B cell (primary cell): ENCODE measurements at regions of chr20 and their contacts with region 1.

Region 1: GRCh38 chr20:37249304-37249703 is 12.3 kb downstream of the GHRH start:
- DNase-seq: no peak
- ATAC-seq: no peak
- H3K4me3 ChIP-seq: no peak overlapping the region
- H3K4me3 Mint-ChIP-seq: no peak overlapping the region
- H3K27ac ChIP-seq: no peak overlapping the region
- H3K27ac Mint-ChIP-seq: no peak overlapping the region
- H3K4me1 ChIP-seq: no peaks in the 10 kb centered on the region
- H3K4me1 Mint-ChIP-seq: no peaks in the 10 kb centered on the region
- H3K27me3 ChIP-seq: no peaks in the 10 kb centered on the region
- H3K27me3 Mint-ChIP-seq: no peaks in the 10 kb centered on the region
- CTCF ChIP-seq: no peak

Region 2: DNA sequence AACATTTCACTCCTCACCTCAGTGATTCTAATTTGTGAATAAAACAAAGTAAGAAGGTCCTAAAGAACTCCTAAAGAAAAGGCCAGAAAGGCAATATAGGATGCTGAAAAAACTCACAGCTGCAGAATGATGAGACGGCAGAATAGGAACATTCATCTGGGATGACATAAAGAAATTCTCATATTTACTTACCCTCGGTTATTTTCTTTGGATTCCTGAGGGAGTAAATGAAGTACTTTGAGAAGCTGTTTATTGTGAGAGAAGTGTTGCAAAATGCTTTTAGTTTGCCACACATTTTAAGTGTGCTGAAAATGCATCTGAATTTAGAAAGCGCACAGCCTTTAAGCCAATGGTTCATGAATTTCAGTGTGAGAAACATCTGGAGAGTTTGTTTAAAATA is 117.8 kb before region 1 on chr20:
- CTCF ChIA-PET with region 1: no interaction called
- POLR2A ChIA-PET with region 1: no interaction called
- intact Hi-C with region 1: no loop called
- DNase-seq: no peak
- ATAC-seq: no peak
- H3K4me3 ChIP-seq: no peak overlapping the region
- H3K4me3 Mint-ChIP-seq: no peak overlapping the region
- H3K27ac ChIP-seq: no peak overlapping the region
- H3K27ac Mint-ChIP-seq: no peak overlapping the region
- H3K4me1 ChIP-seq: no peaks in the 10 kb centered on the region
- H3K4me1 Mint-ChIP-seq: no peaks in the 10 kb centered on the region
- H3K27me3 ChIP-seq: no peaks in the 10 kb centered on the region
- H3K27me3 Mint-ChIP-seq: no peaks in the 10 kb centered on the region
- CTCF ChIP-seq: no peak

Region 3: GRCh38 chr20:37336369-37337207 is 87.3 kb after region 1 on chr20:
- CTCF ChIA-PET with region 1: no interaction called
- POLR2A ChIA-PET with region 1: interaction called, 12 read pairs
- intact Hi-C with region 1: no loop called
- DNase-seq: peak; percentile 81
- ATAC-seq: peak; percentile 79
- H3K4me3 ChIP-seq: peak overlapping the region in 3 of 5 experiments; percentile 27 to 44 (median 30)
- H3K4me3 Mint-ChIP-seq: peak overlapping the region; percentile 77
- H3K27ac ChIP-seq: peak overlapping the region; percentile 59 to 60
- H3K27ac Mint-ChIP-seq: peak overlapping the region; percentile 88
- H3K4me1 ChIP-seq: peaks cover 28 to 38% of the 10 kb centered on the region in 2 donors
- H3K4me1 Mint-ChIP-seq: peaks cover 32% of the 10 kb centered on the region
- H3K27me3 ChIP-seq: no peaks in the 10 kb centered on the region
- H3K27me3 Mint-ChIP-seq: no peaks in the 10 kb centered on the region
- CTCF ChIP-seq: no peak

Region 4: DNA sequence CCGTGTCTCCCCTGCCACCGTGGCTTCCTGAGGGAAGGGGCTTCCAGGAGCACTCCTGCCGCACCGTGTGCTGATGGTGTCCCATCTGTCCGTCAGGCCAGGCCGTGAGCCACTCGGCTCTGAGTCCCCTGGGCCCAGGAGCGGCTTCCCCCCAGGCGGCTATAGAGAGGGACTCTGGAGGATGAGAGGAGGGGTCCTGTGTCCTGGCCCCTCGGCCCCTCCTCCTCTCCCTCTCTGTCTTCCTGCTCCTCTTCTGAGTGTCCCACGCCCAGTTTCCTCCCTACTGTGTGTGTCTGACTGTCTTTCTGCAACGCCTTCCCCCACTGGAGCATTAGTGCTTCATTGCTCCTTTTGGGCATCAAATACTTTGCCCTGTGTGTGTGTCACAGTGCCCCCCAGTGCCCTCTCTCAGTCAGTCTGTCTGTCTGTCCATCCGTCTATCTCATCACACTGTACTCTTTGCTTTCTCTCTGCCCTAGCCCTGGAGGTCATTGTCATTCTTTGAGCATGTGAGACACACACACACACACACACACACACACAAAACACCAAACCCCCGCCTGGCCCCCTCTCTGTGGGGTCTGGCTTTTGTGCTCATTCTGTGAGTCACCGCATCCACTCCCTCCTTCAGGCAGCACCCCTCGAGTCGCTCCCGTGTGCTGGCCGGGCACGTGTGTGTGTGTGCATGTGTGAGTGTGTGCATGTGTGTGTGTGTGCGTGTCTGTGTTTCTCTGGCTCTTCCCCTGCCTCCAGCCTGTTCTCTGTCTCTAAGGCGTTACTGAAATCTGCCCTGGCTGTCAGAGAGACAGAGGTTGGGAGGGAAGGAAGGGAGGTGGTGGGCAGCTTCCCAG is 168.5 kb after region 1 on chr20:
- CTCF ChIA-PET with region 1: no interaction called
- POLR2A ChIA-PET with region 1: no interaction called
- intact Hi-C with region 1: no loop called
- DNase-seq: no peak
- ATAC-seq: no peak
- H3K4me3 ChIP-seq: no peak overlapping the region
- H3K4me3 Mint-ChIP-seq: no peak overlapping the region
- H3K27ac ChIP-seq: no peak overlapping the region
- H3K27ac Mint-ChIP-seq: no peak overlapping the region
- H3K4me1 ChIP-seq: peaks cover 2% of the 10 kb centered on the region in 2 donors
- H3K4me1 Mint-ChIP-seq: no peaks in the 10 kb centered on the region
- H3K27me3 ChIP-seq: peaks cover 0 to 16% (median 4%) of the 10 kb centered on the region in 4 experiments
- H3K27me3 Mint-ChIP-seq: peaks cover 14% of the 10 kb centered on the region
- CTCF ChIP-seq: no peak